Dorsolateral prefrontal cortex (tissue), 120 donors: ENCODE measurements at regions of chr12 and their contacts with region 1.

Region 1: GRCh38 chr12:116737774-116738700 is at the starts of genes RNFT2 and SPRING1:
- DNase-seq: peak; percentile 99 to 100 (median 100)
- H3K4me3 ChIP-seq: peak within 1 kb of the TSS; percentile 54 to 99 (median 88)
- H3K27ac ChIP-seq: peak within 1 kb of the TSS in 43 of 59 donors; percentile 16 to 87 (median 71)
- H3K27me3 ChIP-seq: no peaks in the 10 kb centered on the region
- CTCF ChIP-seq: peak in 29 of 56 donors; percentile 5 to 63 (median 23)
- total RNA-seq, gene RNFT2: 30.4 to 86.7 (median 60.1) TPM
- total RNA-seq, gene SPRING1: 30.7 to 74.8 (median 44.1) TPM

Region 2: DNA sequence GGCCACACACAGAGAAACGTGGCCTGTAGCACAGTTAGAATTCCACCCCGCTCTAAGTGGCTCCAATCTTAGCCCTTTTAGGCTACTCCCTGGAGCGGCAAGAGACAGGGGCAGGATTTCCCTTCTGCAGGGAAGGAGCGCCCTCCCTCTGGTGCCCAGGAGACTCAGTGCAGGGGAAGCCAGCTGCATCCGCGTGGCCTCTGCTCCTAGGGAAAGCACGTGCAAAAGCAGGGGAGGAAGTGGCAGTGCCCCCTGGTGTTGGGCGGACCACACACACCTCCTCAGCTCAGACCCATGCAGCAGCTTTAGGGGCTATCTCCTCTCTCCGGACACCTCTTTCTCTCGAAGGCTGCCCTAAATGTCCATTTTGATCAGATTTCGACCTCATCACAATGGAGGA is 50.1 kb before region 1 on chr12:
- intact Hi-C with region 1: no loop called
- DNase-seq: no peak
- H3K4me3 ChIP-seq: no peak overlapping the region
- H3K27ac ChIP-seq: no peak overlapping the region
- H3K27me3 ChIP-seq: peaks cover 0 to 31% (median 8%) of the 10 kb centered on the region in 45 donors
- CTCF ChIP-seq: peak in 42 of 56 donors; percentile 9 to 57 (median 31)

Region 3: GRCh38 chr12:116708826-116709756 is 28.9 kb before region 1 on chr12:
- intact Hi-C with region 1: loop called (anchors 2 kb)
- DNase-seq: peak; percentile 75 to 97 (median 90)
- H3K4me3 ChIP-seq: peak overlapping the region; percentile 29 to 66 (median 50)
- H3K27ac ChIP-seq: peak overlapping the region in 57 of 59 donors; percentile 21 to 95 (median 84)
- H3K27me3 ChIP-seq: no peaks in the 10 kb centered on the region
- CTCF ChIP-seq: peak; percentile 61 to 95 (median 84)

Region 4: GRCh38 chr12:116818948-116819832 is 81.2 kb after region 1 on chr12:
- intact Hi-C with region 1: loop called (anchors 2 to 5 kb)
- DNase-seq: peak; percentile 84 to 95 (median 92)
- H3K4me3 ChIP-seq: peak overlapping the region; percentile 58 to 97 (median 84)
- H3K27ac ChIP-seq: peak overlapping the region; percentile 66 to 98 (median 95)
- H3K27me3 ChIP-seq: no peaks in the 10 kb centered on the region
- CTCF ChIP-seq: peak in 32 of 56 donors; percentile 8 to 61 (median 29)